Transverse colon (tissue), 4 donors: ENCODE measurements at regions of chr10 and their contacts with region 1.

Region 1: GRCh38 chr10:60048091-60048501 is 141.7 kb upstream of the CCDC6 start:
- DNase-seq: peak; percentile 14
- H3K4me3 ChIP-seq: no peak overlapping the region
- H3K27ac ChIP-seq: no peak overlapping the region
- H3K4me1 ChIP-seq: peaks cover 0 to 22% (median 10%) of the 10 kb centered on the region in 4 donors
- H3K27me3 ChIP-seq: no peaks in the 10 kb centered on the region
- CTCF ChIP-seq: peak in 1 of 5 experiments; percentile 19
- EP300 ChIP-seq: no peak
- POLR2A ChIP-seq: no peak

Region 2: GRCh38 chr10:59857049-59857448 is 191.0 kb before region 1 on chr10:
- in situ Hi-C with region 1: loop called in 1 of 4 experiments (anchors 10 kb)
- intact Hi-C with region 1: no loop called
- DNase-seq: no peak
- H3K4me3 ChIP-seq: no peak overlapping the region
- H3K27ac ChIP-seq: no peak overlapping the region
- H3K4me1 ChIP-seq: peaks cover 10 to 59% (median 22%) of the 10 kb centered on the region in 4 donors
- H3K27me3 ChIP-seq: no peaks in the 10 kb centered on the region
- CTCF ChIP-seq: no peak
- EP300 ChIP-seq: no peak
- POLR2A ChIP-seq: no peak